A549 (cell line): ENCODE measurements at regions of chr22 and their contacts with region 1.

Region 1: DNA sequence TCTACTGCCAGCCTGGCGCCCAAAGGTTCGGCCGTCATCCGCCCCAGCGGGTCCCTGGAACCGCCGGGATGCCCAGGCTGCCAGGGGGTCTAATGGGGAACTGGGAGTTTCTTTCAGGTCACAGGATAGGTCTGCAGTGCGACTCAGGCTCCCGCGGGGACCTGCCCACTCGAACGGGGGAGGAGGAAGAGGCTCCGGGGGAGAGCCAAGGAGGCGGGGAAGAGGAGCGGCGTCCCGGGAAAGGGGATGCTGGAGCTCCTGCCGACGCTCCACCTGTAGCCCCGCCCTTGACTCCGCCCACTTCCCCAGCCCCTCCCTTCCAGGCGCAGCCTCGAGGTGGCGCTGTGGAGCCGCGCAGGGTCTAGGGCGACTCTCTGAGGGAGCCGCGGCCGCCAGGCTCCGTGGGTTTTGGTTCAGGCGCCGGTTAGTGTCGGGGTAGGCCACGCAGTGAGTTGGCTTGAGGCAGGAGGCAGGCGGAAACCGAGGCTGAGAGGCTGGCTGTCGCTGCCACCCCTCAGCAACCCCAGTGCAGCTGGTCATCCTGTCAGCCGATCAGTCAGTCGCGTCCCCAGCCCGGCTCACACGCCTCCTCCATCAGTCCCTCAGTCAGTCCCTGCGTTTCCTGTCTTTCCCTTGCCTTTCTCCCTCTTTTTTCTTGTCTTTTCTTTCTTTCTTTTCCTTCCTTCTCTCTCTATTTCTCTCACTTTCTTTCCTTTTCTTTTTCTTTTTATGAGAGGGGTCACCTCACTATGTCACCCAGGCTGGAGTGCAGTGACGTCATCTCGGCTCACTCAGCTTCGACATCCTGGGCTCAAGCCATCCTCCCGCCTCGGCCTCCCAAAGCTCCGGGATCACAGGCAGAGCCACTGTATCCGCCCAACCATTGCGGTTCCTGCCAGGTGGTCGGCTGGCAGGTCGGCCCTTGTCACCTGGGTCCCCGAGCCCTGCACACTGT is 26.4 kb downstream of the YWHAH start:
- DNase-seq: peak; percentile 71 to 75
- ATAC-seq: peak; percentile 90 to 92
- H3K4me3 ChIP-seq: peak overlapping the region; percentile 68
- H3K27ac ChIP-seq: peak overlapping the region in 1 of 2 experiments; percentile 71; a peak in 3 of 6 replicates
- H3K4me1 ChIP-seq: peaks cover 7% of the 10 kb centered on the region; the same call in 1 of the 3 replicates
- CTCF ChIP-seq: peak; percentile 65
- EP300 ChIP-seq: no peak
- POLR2A ChIP-seq: no peak
- RAD21 ChIP-seq: peak; percentile 47 to 60; a peak in 4 of 5 replicates

Region 2: GRCh38 chr22:31661851-31662656 is 308.7 kb before region 1 on chr22 and contains the start of gene PISD:
- CTCF ChIA-PET with region 1: interaction called, 23 read pairs
- POLR2A ChIA-PET with region 1: interaction called, 7 read pairs
- DNase-seq: peak; percentile 88 to 94
- ATAC-seq: peak; percentile 92
- H3K4me3 ChIP-seq: peak within 1 kb of the TSS; percentile 72
- H3K27ac ChIP-seq: peak within 1 kb of the TSS; percentile 80 to 90
- H3K4me1 ChIP-seq: 0 out of 3 replicates have a peak, but pooled peaks cover 3% of the 10 kb centered on the region
- CTCF ChIP-seq: no peak
- EP300 ChIP-seq: no peak
- POLR2A ChIP-seq: peak; percentile 78
- RAD21 ChIP-seq: no peak
- polyA plus RNA-seq, gene PISD: 11.0 and 13.1 TPM in 2 replicates

Region 3: GRCh38 chr22:31870890-31871289 is 99.9 kb before region 1 on chr22:
- CTCF ChIA-PET with region 1: interaction called, 12 read pairs
- POLR2A ChIA-PET with region 1: no interaction called
- DNase-seq: peak; percentile 68 to 74
- ATAC-seq: peak; percentile 98 to 99
- H3K4me3 ChIP-seq: no peak overlapping the region
- H3K27ac ChIP-seq: peak overlapping the region in 1 of 2 experiments; percentile 33; a peak in 1 of 6 replicates
- H3K4me1 ChIP-seq: peaks cover 18% of the 10 kb centered on the region
- CTCF ChIP-seq: peak; percentile 37
- EP300 ChIP-seq: no peak
- POLR2A ChIP-seq: no peak
- RAD21 ChIP-seq: peak in 1 of 2 experiments; percentile 42; a peak in 3 of 5 replicates

Region 4: GRCh38 chr22:31944700-31945474 is 25.9 kb before region 1 on chr22:
- CTCF ChIA-PET with region 1: interaction called, 12 read pairs
- POLR2A ChIA-PET with region 1: no interaction called
- DNase-seq: peak in 1 of 2 experiments; percentile 16
- ATAC-seq: peak; percentile 19 to 31; a peak in 5 of 6 replicates
- H3K4me3 ChIP-seq: peak overlapping the region; percentile 96
- H3K27ac ChIP-seq: peak overlapping the region; percentile 100
- H3K4me1 ChIP-seq: peaks cover 26% of the 10 kb centered on the region
- CTCF ChIP-seq: no peak
- EP300 ChIP-seq: no peak
- POLR2A ChIP-seq: no peak
- RAD21 ChIP-seq: no peak

Region 5: DNA sequence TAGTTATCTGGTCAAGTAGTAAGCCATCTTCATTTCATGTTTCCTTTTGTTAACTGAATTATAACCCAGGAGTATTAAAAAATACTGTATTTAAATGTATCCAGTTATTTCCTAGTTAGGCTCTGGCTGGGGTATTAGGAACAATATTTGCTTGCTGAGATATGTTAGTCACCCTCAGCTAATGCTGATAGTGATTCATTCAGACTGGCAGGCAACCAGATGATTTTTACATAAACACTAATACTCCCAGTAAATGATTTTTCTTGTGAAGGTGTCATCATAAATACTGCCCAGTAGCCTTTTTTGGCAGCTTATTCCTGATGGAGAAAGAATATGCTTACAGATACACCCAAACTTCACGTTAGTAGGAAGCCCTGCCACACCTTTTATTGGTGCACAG is 18.3 kb before region 1 on chr22:
- CTCF ChIA-PET with region 1: interaction called, 76 read pairs
- POLR2A ChIA-PET with region 1: no interaction called
- DNase-seq: peak in 1 of 2 experiments; percentile 28
- ATAC-seq: peak; percentile 73 to 75; a peak in 5 of 6 replicates
- H3K4me3 ChIP-seq: peak overlapping the region; percentile 18; the same call in 1 of the 3 replicates
- H3K27ac ChIP-seq: peak overlapping the region in 1 of 2 experiments; percentile 69; a peak in 2 of 6 replicates
- H3K4me1 ChIP-seq: peaks cover 48% of the 10 kb centered on the region
- CTCF ChIP-seq: no peak
- EP300 ChIP-seq: no peak
- POLR2A ChIP-seq: no peak
- RAD21 ChIP-seq: no peak

Region 6: DNA sequence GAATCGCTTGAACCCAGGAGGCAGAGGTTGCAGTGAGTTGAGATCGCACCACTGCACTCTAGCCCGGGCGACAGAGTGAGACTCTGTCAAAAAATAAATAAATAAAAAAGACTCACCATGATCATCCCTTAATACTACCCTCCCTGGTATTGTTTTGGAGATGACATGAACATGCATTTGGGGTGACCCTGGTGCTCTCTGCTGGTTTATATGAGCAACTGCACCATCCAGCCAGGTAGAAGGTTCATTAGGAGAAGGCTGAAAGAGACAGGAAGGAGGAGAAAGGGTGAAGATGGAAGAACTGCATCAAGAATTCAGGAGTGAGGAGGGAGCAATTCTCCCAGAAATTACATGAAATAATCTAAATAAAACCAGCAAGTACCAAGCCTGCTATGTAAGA is 110.1 kb after region 1 on chr22:
- CTCF ChIA-PET with region 1: interaction called, 201 read pairs
- POLR2A ChIA-PET with region 1: no interaction called
- DNase-seq: peak; percentile 39 to 60
- ATAC-seq: peak; percentile 59 to 77; a peak in 3 of 6 replicates
- H3K4me3 ChIP-seq: no peak overlapping the region
- H3K27ac ChIP-seq: no peak overlapping the region
- H3K4me1 ChIP-seq: peaks cover 27% of the 10 kb centered on the region
- CTCF ChIP-seq: peak; percentile 49
- EP300 ChIP-seq: no peak
- POLR2A ChIP-seq: no peak
- RAD21 ChIP-seq: peak; percentile 66 to 81

Region 7: GRCh38 chr22:32486656-32487390 is 516.1 kb after region 1 on chr22:
- CTCF ChIA-PET with region 1: no interaction called
- POLR2A ChIA-PET with region 1: no interaction called
- DNase-seq: no peak
- ATAC-seq: no peak
- H3K4me3 ChIP-seq: no peak overlapping the region
- H3K27ac ChIP-seq: no peak overlapping the region
- H3K4me1 ChIP-seq: 0 out of 3 replicates have a peak, but pooled peaks cover 4% of the 10 kb centered on the region
- CTCF ChIP-seq: no peak
- EP300 ChIP-seq: no peak
- POLR2A ChIP-seq: no peak
- RAD21 ChIP-seq: no peak